MCF 10A (cell line): ENCODE measurements at regions of chr1 and their contacts with region 1.

Region 1: DNA sequence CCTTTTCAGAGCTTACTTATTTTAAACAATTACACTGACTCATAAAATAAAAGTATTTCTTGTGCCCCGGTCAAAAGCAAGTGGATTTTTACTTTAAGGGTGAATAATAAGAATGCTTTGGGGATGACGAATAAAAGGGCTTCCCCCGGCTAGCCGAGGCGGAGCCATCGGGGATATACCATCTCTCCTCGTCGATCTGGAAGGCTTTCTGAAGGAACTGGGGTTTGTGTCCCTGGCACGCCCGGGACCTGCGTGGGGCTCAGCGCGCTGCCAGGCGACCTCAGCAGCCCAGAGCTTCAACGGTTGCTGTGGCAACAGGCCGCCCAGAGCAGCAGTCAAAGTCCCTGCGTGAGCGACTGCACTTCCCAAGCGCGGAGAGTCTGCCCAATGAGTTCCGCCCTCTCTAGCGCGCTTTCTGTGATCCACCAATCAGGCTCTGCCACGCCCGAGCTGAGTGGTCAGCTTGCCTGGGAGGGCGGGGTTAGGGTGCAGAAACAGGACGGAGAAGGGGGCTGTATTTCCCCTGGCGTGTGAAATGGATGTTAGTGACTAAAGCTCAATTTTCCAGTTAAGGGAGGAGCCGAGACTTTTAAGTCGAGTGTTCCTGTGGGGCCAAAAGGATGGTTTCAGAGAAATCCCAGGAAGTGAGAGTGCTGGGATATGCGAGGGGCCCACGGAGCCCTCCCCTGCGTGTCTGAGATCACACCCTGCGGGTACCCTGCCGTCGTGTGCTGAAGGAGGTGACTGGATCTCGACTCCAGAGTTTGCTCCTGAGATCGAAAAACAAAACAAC is 33.0 kb upstream of the MGST3 start:
- DNase-seq: peak; percentile 99
- H3K4me3 Mint-ChIP-seq: peak overlapping the region; percentile 89
- H3K27ac Mint-ChIP-seq: peak overlapping the region; percentile 95
- H3K4me1 Mint-ChIP-seq: peaks cover 23% of the 10 kb centered on the region
- H3K27me3 Mint-ChIP-seq: peaks cover 27% of the 10 kb centered on the region
- CTCF ChIP-seq: no peak

Region 2: GRCh38 chr1:165367375-165367993 is 230.6 kb before region 1 on chr1:
- CTCF ChIA-PET with region 1: interaction called, 128 read pairs
- POLR2A ChIA-PET with region 1: no interaction called
- intact Hi-C with region 1: loop called (anchors 1 kb)
- DNase-seq: peak; percentile 89
- H3K4me3 Mint-ChIP-seq: no peak overlapping the region
- H3K27ac Mint-ChIP-seq: no peak overlapping the region
- H3K4me1 Mint-ChIP-seq: peaks cover 23% of the 10 kb centered on the region
- H3K27me3 Mint-ChIP-seq: peaks cover 38% of the 10 kb centered on the region
- CTCF ChIP-seq: peak; percentile 99

Region 3: GRCh38 chr1:165575468-165576099 is 22.5 kb before region 1 on chr1:
- CTCF ChIA-PET with region 1: interaction called, 14 read pairs
- POLR2A ChIA-PET with region 1: no interaction called
- intact Hi-C with region 1: no loop called
- DNase-seq: no peak
- H3K4me3 Mint-ChIP-seq: no peak overlapping the region
- H3K27ac Mint-ChIP-seq: no peak overlapping the region
- H3K4me1 Mint-ChIP-seq: no peaks in the 10 kb centered on the region
- H3K27me3 Mint-ChIP-seq: peaks cover 9% of the 10 kb centered on the region
- CTCF ChIP-seq: no peak

Region 4: DNA sequence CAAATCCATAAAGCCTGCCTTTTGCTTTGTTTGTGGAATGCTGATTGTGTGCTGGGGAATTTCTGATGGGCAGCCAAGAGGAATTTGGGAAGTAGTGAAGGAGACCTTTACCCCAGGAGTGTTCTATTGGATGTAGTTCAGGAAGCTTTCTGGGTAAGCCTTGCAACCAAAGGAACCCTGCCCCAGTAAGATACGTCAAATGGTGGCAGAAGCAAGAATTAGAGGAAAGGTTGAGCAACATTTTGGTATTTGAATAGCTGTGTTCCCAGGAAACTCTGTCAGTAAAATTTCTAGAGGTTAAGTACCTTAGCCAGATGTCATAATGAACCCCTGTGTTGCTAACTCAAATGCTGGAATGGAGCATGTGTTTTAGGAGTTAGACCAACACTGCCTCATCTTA is 39.3 kb after region 1 on chr1:
- CTCF ChIA-PET with region 1: interaction called, 31 read pairs
- POLR2A ChIA-PET with region 1: interaction called, 104 read pairs
- intact Hi-C with region 1: loop called (anchors 1 kb)
- DNase-seq: peak; percentile 80
- H3K4me3 Mint-ChIP-seq: no peak overlapping the region
- H3K27ac Mint-ChIP-seq: peak overlapping the region; percentile 78
- H3K4me1 Mint-ChIP-seq: peaks cover 37% of the 10 kb centered on the region
- H3K27me3 Mint-ChIP-seq: no peaks in the 10 kb centered on the region
- CTCF ChIP-seq: no peak

Region 5: DNA sequence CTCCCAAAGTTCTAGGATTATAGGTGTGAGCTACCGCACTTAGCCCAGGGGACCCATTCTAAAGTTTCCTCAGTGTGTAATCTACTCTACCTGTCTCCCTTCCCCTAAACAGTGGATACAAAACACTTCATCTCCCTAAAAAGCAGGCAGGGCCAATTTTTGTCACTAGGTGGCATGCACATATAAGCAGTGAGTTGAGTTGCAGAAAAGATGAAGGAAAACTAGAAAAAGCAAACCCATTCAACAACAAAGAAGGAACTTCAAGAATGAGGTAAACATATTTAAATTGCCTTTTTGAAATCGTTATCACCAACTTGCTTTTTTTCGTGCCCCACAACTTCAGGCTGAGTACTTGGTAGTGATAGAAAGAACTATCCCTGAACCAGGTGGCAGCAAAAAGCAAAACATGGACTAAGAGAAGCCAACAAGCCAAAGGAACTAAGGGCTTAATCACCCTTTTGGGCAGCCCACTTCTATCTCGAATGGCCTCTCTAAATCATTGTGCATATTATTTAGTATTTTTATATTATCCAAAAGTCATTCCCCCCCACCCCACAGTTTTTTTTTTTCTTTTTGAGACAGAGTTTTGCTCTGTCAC is 119.9 kb after region 1 on chr1:
- CTCF ChIA-PET with region 1: interaction called, 19 read pairs
- POLR2A ChIA-PET with region 1: no interaction called
- intact Hi-C with region 1: loop called (anchors 1 kb)
- DNase-seq: peak; percentile 80
- H3K4me3 Mint-ChIP-seq: no peak overlapping the region
- H3K27ac Mint-ChIP-seq: no peak overlapping the region
- H3K4me1 Mint-ChIP-seq: no peaks in the 10 kb centered on the region
- H3K27me3 Mint-ChIP-seq: no peaks in the 10 kb centered on the region
- CTCF ChIP-seq: peak; percentile 87

Region 6: GRCh38 chr1:165914136-165914798 is 316.2 kb after region 1 on chr1:
- CTCF ChIA-PET with region 1: interaction called, 161 read pairs
- POLR2A ChIA-PET with region 1: interaction called, 4 read pairs
- intact Hi-C with region 1: loop called (anchors 1 kb)
- DNase-seq: peak; percentile 88
- H3K4me3 Mint-ChIP-seq: no peak overlapping the region
- H3K27ac Mint-ChIP-seq: peak overlapping the region; percentile 37
- H3K4me1 Mint-ChIP-seq: peaks cover 22% of the 10 kb centered on the region
- H3K27me3 Mint-ChIP-seq: no peaks in the 10 kb centered on the region
- CTCF ChIP-seq: peak; percentile 96